ENCODE measurements at regions of chr7 and their contacts with region 1.

Region 1: GRCh38 chr7:24979863-24980533 is at the start of gene OSBPL3:
- DNase-seq: peak; percentile 95
- ATAC-seq: peak; percentile 96
- total RNA-seq, gene OSBPL3: 8.4 TPM

Region 2: DNA sequence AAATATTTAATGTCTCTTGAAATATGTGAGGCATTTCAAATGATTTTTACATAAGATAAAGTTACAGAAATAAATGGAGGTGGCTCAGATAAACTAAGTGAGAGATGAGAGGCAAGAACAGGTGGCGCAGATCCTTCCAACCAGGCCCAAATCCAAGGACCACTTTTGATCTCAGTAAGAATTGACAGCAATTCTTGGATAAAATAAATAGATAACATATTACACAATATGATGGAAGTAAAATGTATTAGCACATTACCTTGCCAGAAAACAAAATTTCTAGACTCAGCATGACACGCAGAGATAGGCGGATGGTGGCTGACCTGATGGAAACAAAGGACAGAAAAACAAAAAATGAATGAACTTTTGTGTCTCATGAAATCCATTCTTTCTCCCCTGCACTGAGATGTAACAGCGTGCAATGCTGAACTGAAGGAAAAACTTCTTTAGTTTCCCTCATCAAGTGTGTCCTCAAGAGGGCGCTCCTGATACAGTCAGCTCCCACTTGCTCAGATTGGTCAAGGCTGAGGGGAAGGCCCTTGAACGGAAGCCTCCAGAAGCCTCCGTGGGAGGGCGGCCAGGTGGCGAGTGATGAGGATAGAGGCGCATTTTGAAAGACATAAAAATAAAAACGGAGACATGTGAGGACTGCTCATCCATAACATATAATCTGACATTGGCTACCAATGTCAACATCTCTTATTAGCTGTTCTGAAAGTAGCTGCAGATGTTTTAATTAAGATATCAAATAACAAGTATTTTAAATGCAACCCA is 159.9 kb before region 1 on chr7:
- intact Hi-C with region 1: loop called (anchors 5 kb)
- DNase-seq: peak; percentile 81
- ATAC-seq: peak; percentile 94

Region 3: GRCh38 chr7:24825931-24826661 is 153.9 kb before region 1 on chr7:
- intact Hi-C with region 1: loop called (anchors 5 kb)
- DNase-seq: no peak
- ATAC-seq: no peak

Region 4: DNA sequence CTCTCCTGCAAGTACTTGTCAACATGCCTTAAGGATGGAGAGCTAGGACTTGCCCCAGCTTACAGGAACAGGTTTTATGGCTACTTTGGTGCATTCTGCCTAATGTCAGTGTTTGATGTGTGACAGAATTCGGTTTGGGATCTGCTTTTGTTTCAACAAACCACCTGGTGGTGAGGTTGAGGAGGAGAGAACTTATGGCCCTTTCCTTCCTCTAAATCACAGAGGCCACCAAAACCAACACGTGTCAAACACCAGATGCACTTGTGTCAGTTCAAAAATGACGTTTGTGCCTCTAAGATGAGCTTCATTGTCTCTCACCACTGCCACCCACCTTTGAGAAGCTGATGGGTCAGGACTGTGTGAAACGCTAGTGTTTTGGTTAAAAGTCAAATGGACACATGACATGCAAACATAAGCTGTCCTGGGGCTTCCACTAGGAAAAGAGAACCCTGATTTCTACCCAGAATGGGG is 83.9 kb before region 1 on chr7:
- intact Hi-C with region 1: loop called (anchors 5 kb)
- DNase-seq: no peak
- ATAC-seq: no peak

Region 5: GRCh38 chr7:25028370-25029021 is 48.5 kb after region 1 on chr7:
- intact Hi-C with region 1: loop called (anchors 5 kb)
- DNase-seq: no peak
- ATAC-seq: no peak

Region 6: GRCh38 chr7:25069900-25070443 is 90.0 kb after region 1 on chr7:
- intact Hi-C with region 1: loop called (anchors 10 kb)
- DNase-seq: no peak
- ATAC-seq: peak; percentile 80

Region 7: DNA sequence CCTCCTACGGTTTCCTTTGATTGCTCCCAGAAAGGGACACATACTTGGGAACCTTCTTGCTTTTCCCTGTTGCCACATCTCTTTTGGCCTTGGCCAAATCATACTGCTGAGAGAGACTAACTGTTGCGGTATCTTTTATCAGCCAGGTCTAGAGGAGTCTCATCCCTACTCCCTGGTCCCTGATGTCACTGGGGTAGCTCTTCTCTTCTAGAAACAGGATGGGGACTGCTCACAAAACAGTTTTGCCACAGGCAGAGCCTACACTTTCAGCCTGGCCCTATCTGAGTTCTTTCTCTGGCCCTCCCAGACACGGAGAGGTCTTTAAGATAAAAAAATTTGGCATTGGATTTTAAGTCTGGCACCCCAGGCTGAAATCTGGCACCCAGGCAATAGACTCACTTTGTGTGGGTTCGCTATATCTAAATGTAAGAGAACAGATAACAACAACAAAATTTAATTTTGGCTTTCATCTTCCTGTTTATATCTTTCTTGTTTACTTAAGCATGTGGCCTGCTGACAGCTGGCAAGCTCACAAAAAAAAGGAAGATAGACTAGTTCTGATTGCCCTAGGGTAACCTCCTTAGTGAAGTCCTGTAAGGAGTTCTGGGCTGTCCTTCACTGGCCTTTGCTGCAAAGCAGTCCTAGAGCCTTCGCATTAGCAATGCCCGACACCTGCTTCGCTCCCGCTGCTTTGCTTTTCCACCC is 476.6 kb after region 1 on chr7:
- intact Hi-C with region 1: no loop called
- DNase-seq: peak; percentile 46
- ATAC-seq: peak; percentile 63